Activated CD4-positive, alpha-beta T cell treated with anti-CD3 and anti-CD28 coated beads for 36 hours (primary cell): ENCODE measurements at regions of chr10 and their contacts with region 1.

Region 1: GRCh38 chr10:112446855-112447711 is at the starts of genes VTI1A and ZDHHC6:
- DNase-seq: peak; percentile 91
- ATAC-seq: peak; percentile 90
- H3K4me3 Mint-ChIP-seq: peak within 1 kb of the TSS; percentile 84
- H3K27ac Mint-ChIP-seq: peak within 1 kb of the TSS; percentile 96
- H3K4me1 Mint-ChIP-seq: peaks cover 52% of the 10 kb centered on the region
- H3K27me3 Mint-ChIP-seq: no peaks in the 10 kb centered on the region
- total RNA-seq, gene VTI1A: 27.1 to 33.4 TPM
- total RNA-seq, gene ZDHHC6: 42.1 to 61.3 TPM

Region 2: DNA sequence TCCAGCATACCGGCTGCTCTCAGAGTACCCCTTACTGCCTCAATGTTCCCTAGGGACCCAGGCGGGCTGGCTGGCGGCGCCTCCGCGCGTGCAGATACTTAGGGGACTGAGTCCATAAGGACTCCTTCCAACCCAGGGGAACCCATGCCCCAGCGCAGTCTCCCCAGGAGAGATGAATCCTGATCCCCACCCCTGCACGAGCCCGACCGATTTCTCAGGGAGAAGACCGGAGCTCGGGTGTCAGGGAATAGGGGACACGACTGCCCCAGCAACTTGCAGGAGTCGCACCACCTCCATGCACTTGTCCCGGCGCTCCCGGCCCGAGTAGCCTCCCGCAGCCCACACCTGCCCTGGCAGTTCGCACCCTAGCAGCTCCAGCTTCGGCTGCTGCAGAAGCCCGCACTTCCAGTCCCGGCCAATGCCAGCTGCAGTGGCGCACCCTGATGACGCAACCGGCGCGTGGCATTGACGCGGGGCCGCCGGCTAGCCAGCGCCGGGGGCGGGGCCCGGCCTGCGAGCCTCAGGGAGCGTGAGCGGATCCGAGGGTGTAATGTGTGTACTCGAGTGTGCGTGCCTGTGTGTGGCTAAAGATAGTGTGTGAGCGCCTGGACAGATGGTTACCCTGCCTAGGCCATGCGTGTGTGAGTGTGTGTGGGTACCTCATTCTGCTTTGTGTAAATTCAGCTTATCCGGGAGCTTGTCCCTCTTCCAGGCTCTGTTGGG is 263.6 kb before region 1 on chr10 and contains the start of gene GPAM:
- CTCF ChIA-PET with region 1: interaction called, 3 read pairs
- POLR2A ChIA-PET with region 1: no interaction called
- intact Hi-C with region 1: loop called (anchors 1 to 10 kb)
- DNase-seq: peak; percentile 98
- ATAC-seq: peak; percentile 97
- H3K4me3 Mint-ChIP-seq: peak within 1 kb of the TSS; percentile 88
- H3K27ac Mint-ChIP-seq: peak within 1 kb of the TSS; percentile 88
- H3K4me1 Mint-ChIP-seq: peaks cover 27% of the 10 kb centered on the region
- H3K27me3 Mint-ChIP-seq: peaks cover 2% of the 10 kb centered on the region
- total RNA-seq, gene GPAM: 5.7 to 7.5 TPM

Region 3: GRCh38 chr10:112314822-112315474 is 132.1 kb before region 1 on chr10:
- CTCF ChIA-PET with region 1: no interaction called
- POLR2A ChIA-PET with region 1: no interaction called
- intact Hi-C with region 1: no loop called
- DNase-seq: peak; percentile 90
- ATAC-seq: peak; percentile 83
- H3K4me3 Mint-ChIP-seq: no peak overlapping the region
- H3K27ac Mint-ChIP-seq: no peak overlapping the region
- H3K4me1 Mint-ChIP-seq: no peaks in the 10 kb centered on the region
- H3K27me3 Mint-ChIP-seq: peaks cover 22% of the 10 kb centered on the region

Region 4: GRCh38 chr10:112412696-112413095 is 34.4 kb before region 1 on chr10:
- CTCF ChIA-PET with region 1: no interaction called
- POLR2A ChIA-PET with region 1: no interaction called
- intact Hi-C with region 1: no loop called
- DNase-seq: no peak
- ATAC-seq: no peak
- H3K4me3 Mint-ChIP-seq: no peak overlapping the region
- H3K27ac Mint-ChIP-seq: no peak overlapping the region
- H3K4me1 Mint-ChIP-seq: no peaks in the 10 kb centered on the region
- H3K27me3 Mint-ChIP-seq: no peaks in the 10 kb centered on the region

Region 5: GRCh38 chr10:112490545-112490944 is 43.5 kb after region 1 on chr10:
- CTCF ChIA-PET with region 1: no interaction called
- POLR2A ChIA-PET with region 1: no interaction called
- intact Hi-C with region 1: no loop called
- DNase-seq: no peak
- ATAC-seq: no peak
- H3K4me3 Mint-ChIP-seq: no peak overlapping the region
- H3K27ac Mint-ChIP-seq: no peak overlapping the region
- H3K4me1 Mint-ChIP-seq: peaks cover 7% of the 10 kb centered on the region
- H3K27me3 Mint-ChIP-seq: no peaks in the 10 kb centered on the region